Adrenal gland (tissue), 19 donors: ENCODE measurements at regions of chr16 and their contacts with region 1.

Region 1: GRCh38 chr16:17578921-17579874 is 108.4 kb upstream of the XYLT1 start:
- DNase-seq: peak; percentile 61 to 82 (median 69)
- H3K4me3 ChIP-seq: no peak overlapping the region
- H3K27ac ChIP-seq: no peak overlapping the region
- H3K4me1 ChIP-seq: no peaks in the 10 kb centered on the region
- H3K27me3 ChIP-seq: no peaks in the 10 kb centered on the region
- CTCF ChIP-seq: peak; percentile 75 to 92 (median 81)
- POLR2A ChIP-seq: no peak

Region 2: GRCh38 chr16:17448640-17449638 is 130.3 kb before region 1 on chr16:
- intact Hi-C with region 1: no loop called
- DNase-seq: peak in 2 of 7 donors; percentile 27
- H3K4me3 ChIP-seq: no peak overlapping the region
- H3K27ac ChIP-seq: peak overlapping the region in 1 of 5 donors; percentile 49
- H3K4me1 ChIP-seq: peaks cover 12 to 20% of the 10 kb centered on the region in 2 donors
- H3K27me3 ChIP-seq: no peaks in the 10 kb centered on the region
- CTCF ChIP-seq: no peak
- POLR2A ChIP-seq: no peak

Region 3: DNA sequence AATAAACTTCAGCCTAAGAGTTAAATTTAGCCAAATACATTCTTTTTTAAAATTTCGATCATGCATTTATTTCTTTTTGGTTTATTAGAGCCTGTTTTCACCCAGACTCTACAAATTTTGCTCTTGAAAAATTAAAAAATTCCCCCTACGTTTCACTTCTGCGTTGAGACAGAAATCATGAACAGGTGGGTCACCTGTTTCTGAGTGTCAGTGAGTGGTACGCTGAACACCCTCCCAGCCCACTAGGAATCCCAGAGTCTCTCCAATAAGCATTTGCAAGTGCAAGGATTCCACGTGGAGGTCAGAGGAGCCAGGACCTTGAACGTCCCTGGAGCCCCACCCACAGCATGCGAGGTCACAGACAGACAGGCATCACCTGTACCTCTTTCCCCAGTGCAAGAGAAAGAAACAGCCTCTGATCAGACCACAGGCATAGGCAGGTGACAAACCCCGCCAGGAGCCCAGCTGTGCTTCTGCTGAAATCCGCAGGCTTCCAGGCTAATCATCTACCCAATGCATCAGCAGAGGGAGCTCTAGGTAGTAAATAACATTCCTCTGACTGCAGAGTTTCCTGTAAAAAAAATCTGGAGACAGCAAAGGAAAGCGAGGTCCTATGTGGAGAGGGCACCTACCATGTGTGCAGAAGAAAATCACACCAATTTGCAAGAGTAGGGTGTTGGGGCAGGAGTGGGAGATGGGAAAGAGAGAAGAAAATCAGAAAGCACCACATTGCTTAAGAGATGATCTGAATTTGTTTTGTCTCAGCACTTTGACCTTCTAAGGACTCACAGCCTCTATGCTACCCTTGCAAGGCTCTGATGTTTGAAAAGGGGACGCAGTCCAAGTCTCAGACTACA is 102.6 kb before region 1 on chr16:
- intact Hi-C with region 1: loop called in 1 of 2 experiments (anchors 5 kb)
- DNase-seq: peak in 6 of 7 donors; percentile 50 to 73 (median 60)
- H3K4me3 ChIP-seq: no peak overlapping the region
- H3K27ac ChIP-seq: no peak overlapping the region
- H3K4me1 ChIP-seq: peaks cover 0 to 21% of the 10 kb centered on the region in 2 donors
- H3K27me3 ChIP-seq: no peaks in the 10 kb centered on the region
- CTCF ChIP-seq: peak; percentile 31 to 65 (median 57)
- POLR2A ChIP-seq: no peak

Region 4: DNA sequence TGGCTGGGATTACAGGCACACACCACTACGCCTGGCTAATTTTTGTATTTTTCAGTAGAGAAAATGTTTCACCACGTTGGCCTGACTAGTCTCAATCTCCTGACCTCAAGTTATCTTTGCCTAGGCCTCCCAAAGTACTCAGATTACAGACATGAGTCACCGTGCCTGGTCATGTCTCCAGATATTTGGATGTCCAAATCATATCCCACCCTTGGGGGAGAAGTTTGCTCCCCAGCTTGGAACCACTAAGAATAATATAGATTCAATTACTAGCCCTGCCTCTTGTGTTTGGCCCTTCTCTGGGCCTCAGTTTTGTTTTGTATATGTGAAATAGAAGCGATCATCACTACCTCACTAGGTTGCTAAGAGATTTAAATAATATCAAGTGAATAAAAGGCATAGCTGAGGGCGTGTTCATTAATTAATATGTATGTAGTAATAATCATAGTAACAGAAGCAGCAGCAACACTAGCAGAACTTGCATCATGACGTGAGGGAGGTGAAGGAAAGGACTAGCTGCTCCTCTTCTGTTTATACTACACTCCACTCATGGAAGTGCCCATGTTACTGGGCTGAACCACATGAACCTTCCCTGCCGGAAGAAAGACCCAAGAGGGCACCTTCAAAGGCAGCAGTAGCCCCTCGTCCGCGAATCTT is 145.2 kb after region 1 on chr16:
- intact Hi-C with region 1: no loop called
- DNase-seq: no peak
- H3K4me3 ChIP-seq: no peak overlapping the region
- H3K27ac ChIP-seq: no peak overlapping the region
- H3K4me1 ChIP-seq: no peaks in the 10 kb centered on the region
- H3K27me3 ChIP-seq: no peaks in the 10 kb centered on the region
- CTCF ChIP-seq: no peak
- POLR2A ChIP-seq: no peak